ENCODE measurements at regions of chr1 and their contacts with region 1.

Region 1: DNA sequence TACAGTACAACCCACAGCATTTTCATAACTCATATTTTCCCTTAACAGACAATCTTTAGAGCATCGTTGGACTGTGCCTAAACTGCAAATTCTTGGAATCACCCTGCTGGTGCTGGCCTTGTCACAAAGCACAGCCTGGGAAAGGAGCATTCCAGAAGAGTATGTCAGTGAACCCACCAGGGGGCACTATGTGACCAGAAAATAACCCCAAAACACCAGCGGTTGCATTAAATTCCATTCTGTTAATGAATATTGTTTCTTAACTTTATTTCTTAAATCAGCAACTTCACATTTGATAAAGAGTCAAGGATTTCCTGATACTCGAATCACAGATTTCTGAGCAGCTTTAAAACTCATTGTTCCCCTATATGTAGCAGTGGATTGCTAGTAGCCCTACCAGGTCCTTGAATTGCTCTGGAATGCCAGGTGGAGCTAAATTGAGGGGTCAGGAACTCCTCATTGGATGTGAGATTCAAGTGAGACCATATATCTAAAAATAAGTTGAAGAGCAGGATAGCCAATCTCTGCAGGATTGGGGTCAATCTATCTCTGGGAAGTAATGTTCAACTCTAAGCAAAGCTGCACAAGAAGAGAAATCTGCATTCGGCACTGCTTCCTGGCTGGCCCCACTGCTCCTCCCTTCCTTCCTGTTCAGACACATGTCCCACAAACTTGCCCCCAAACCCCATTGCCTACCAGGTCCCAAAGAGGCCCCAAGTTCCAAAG is 12.7 kb upstream of the RAB4A start:
- DNase-seq: peak; percentile 71
- ATAC-seq: peak; percentile 26
- H3K4me3 Mint-ChIP-seq: no peak overlapping the region
- H3K27ac Mint-ChIP-seq: no peak overlapping the region
- H3K4me1 Mint-ChIP-seq: peaks cover 26% of the 10 kb centered on the region
- H3K27me3 Mint-ChIP-seq: no peaks in the 10 kb centered on the region
- CTCF ChIP-seq: peak; percentile 96

Region 2: DNA sequence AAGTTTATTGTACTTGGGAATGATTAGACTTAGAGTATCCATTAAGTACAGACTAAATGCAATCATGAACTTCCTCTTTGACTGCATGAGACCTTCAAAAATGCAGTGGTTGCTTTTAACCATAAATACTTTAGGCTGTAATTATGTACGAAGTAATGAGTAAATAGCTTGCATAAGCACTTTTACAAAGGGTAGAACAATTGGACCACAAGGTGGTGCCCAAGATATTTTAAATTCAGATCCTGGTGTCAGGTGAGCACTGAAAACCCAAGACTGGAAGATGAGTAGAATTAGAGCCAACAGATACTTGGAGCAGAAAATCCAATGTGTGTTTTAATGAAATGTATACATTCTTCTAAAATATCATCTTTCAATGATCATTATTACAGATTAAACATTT is 566.3 kb before region 1 on chr1:
- CTCF ChIA-PET with region 1: interaction called, 11 read pairs
- POLR2A ChIA-PET with region 1: no interaction called
- intact Hi-C with region 1: no loop called
- DNase-seq: peak; percentile 29
- ATAC-seq: no peak
- H3K4me3 Mint-ChIP-seq: no peak overlapping the region
- H3K27ac Mint-ChIP-seq: no peak overlapping the region
- H3K4me1 Mint-ChIP-seq: peaks cover 10% of the 10 kb centered on the region
- H3K27me3 Mint-ChIP-seq: peaks cover 3% of the 10 kb centered on the region
- CTCF ChIP-seq: peak; percentile 40

Region 3: GRCh38 chr1:229209816-229210215 is 48.4 kb before region 1 on chr1:
- CTCF ChIA-PET with region 1: no interaction called
- POLR2A ChIA-PET with region 1: no interaction called
- intact Hi-C with region 1: no loop called
- DNase-seq: no peak
- ATAC-seq: peak; percentile 6
- H3K4me3 Mint-ChIP-seq: no peak overlapping the region
- H3K27ac Mint-ChIP-seq: no peak overlapping the region
- H3K4me1 Mint-ChIP-seq: peaks cover 11% of the 10 kb centered on the region
- H3K27me3 Mint-ChIP-seq: no peaks in the 10 kb centered on the region
- CTCF ChIP-seq: no peak

Region 4: GRCh38 chr1:229440851-229441537 is 182.8 kb after region 1 on chr1:
- CTCF ChIA-PET with region 1: interaction called, 8 read pairs
- POLR2A ChIA-PET with region 1: interaction called, 4 read pairs
- intact Hi-C with region 1: loop called (anchors 10 kb)
- DNase-seq: peak; percentile 58
- ATAC-seq: peak; percentile 88
- H3K4me3 Mint-ChIP-seq: no peak overlapping the region
- H3K27ac Mint-ChIP-seq: peak overlapping the region; percentile 83
- H3K4me1 Mint-ChIP-seq: peaks cover 33% of the 10 kb centered on the region
- H3K27me3 Mint-ChIP-seq: peaks cover 10% of the 10 kb centered on the region
- CTCF ChIP-seq: no peak

Region 5: DNA sequence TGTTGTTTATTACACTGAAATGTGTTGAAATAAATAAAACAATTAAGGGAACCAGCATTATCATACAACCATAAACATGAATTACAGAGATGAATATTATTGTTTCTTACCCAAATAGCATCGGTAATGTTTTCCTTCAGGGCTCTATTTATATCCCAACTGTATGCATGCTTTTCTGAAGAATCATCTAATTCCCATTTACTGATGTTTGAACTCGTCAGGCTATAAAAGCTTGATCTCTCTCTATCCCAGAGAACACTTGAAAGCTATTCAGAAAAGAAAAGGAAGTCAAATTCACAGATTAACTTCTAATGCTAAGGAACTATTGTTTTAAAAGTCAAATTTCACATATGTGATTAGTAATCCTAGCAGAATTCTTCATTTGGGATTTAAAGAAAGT is 237.6 kb after region 1 on chr1:
- CTCF ChIA-PET with region 1: interaction called, 13 read pairs
- POLR2A ChIA-PET with region 1: no interaction called
- intact Hi-C with region 1: no loop called
- DNase-seq: no peak
- ATAC-seq: no peak
- H3K4me3 Mint-ChIP-seq: no peak overlapping the region
- H3K27ac Mint-ChIP-seq: no peak overlapping the region
- H3K4me1 Mint-ChIP-seq: no peaks in the 10 kb centered on the region
- H3K27me3 Mint-ChIP-seq: no peaks in the 10 kb centered on the region
- CTCF ChIP-seq: no peak